GM10248 (cell line): ENCODE measurements at regions of chr1 and their contacts with region 1.

Region 1: GRCh38 chr1:151534665-151535278 is 5.3 kb upstream of the TUFT1 start:
- DNase-seq: peak; percentile 77
- CTCF ChIP-seq: peak; percentile 90

Region 2: GRCh38 chr1:151520359-151520758 is 14.4 kb before region 1 on chr1:
- CTCF ChIA-PET with region 1: interaction called, 14 read pairs
- POLR2A ChIA-PET with region 1: no interaction called
- DNase-seq: no peak
- CTCF ChIP-seq: peak; percentile 31

Region 3: GRCh38 chr1:151733134-151733533 is 198.4 kb after region 1 on chr1:
- CTCF ChIA-PET with region 1: interaction called, 20 read pairs
- POLR2A ChIA-PET with region 1: no interaction called
- DNase-seq: no peak
- CTCF ChIP-seq: no peak

Region 4: DNA sequence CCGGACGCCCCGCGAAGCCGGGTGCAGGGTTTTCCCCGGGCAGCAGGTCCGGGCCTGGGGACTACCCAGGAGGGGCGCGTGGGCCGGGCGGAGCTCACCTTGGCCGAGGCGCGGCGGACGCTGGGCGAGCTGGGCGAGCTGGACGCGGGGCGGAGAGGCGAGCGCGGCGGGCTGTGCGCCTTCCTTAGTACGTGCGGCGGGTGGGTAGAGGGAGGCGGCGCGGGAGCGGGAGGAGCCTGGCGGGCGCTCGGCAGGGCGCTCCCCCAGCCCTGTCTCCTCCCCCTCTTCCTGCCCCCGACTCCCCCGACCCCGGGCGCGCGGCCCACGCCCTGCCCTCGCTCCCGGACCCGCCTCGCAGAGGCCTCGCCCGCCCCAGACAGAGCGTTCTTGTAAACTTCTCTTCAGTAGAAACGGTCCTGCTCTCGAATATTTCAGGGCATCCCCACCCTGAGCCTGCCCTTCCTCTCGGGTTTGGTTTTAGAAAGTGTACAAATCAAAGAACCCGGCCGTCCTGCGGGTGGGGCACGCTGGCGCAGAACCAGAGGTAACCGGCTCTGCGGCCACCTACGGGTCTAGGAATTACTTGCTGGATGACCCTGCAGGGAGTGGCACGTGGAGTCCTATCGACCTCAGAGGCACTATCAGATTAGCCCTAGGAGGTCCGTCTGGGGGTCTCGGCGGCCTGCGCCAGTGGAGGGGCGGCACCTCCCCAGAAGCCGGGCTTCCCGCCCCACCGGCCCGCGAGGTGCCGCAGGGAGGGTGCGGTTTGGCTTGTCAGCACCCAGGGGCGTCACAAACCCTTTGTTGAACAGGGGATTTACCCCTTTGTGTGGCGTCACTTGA is 459.1 kb after region 1 on chr1 and contains the start of gene S100A10:
- CTCF ChIA-PET with region 1: no interaction called
- POLR2A ChIA-PET with region 1: no interaction called
- DNase-seq: peak; percentile 46
- CTCF ChIP-seq: no peak